ENCODE measurements at regions of chr6 and their contacts with region 1.

Region 1: GRCh38 chr6:42879372-42880239 is at the start of gene RPL7L1:
- H3K4me3 ChIP-seq: peak within 1 kb of the TSS; percentile 95
- H3K27ac ChIP-seq: peak within 1 kb of the TSS; percentile 99
- H3K4me1 ChIP-seq: no peaks in the 10 kb centered on the region
- CTCF ChIP-seq: peak; percentile 63

Region 2: GRCh38 chr6:42563697-42564505 is 315.7 kb before region 1 on chr6 and contains the start of gene UBR2:
- CTCF ChIA-PET with region 1: interaction called, 8 read pairs
- POLR2A ChIA-PET with region 1: interaction called, 11 read pairs
- H3K4me3 ChIP-seq: peak within 1 kb of the TSS; percentile 82
- H3K27ac ChIP-seq: peak within 1 kb of the TSS; percentile 59
- H3K4me1 ChIP-seq: no peaks in the 10 kb centered on the region
- CTCF ChIP-seq: peak; percentile 96

Region 3: GRCh38 chr6:42661540-42662153 is 218.0 kb before region 1 on chr6:
- CTCF ChIA-PET with region 1: interaction called, 79 read pairs
- POLR2A ChIA-PET with region 1: interaction called, 5 read pairs
- H3K4me3 ChIP-seq: no peak overlapping the region
- H3K27ac ChIP-seq: no peak overlapping the region
- H3K4me1 ChIP-seq: no peaks in the 10 kb centered on the region
- CTCF ChIP-seq: peak; percentile 47; the same call in 1 of the 2 replicates

Region 4: DNA sequence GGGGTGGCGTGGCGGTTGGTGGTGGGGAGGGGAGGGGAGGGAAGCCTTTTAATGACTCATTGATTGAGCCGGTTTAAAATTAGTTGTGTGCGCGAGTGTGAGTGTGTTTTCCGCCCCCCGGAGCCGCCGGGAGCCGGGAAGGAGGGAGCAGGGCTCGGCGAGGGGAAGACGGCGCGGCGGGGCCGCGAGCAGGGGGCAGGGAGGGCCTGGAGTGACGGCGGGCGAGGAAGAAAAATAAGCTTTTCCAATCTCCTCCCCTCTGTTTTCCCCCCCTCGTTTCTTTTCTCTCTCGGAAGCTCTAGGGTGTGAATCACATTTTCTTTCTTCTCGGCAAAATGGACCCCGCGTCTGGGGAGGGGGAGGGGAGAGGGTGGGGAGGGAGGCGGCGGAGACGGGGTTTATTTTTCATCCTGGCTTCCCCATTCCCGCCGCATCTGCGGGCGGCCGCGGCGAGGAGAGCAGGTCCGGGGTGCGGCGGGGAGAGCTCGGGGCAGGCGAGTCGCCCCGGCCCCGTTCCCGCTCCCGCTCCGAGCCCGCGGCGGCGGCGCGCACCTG is 96.9 kb before region 1 on chr6:
- CTCF ChIA-PET with region 1: interaction called, 9 read pairs
- POLR2A ChIA-PET with region 1: interaction called, 23 read pairs
- H3K4me3 ChIP-seq: peak overlapping the region; percentile 98
- H3K27ac ChIP-seq: peak overlapping the region; percentile 100
- H3K4me1 ChIP-seq: peaks cover 10% of the 10 kb centered on the region; the same call in 1 of the 2 replicates
- CTCF ChIP-seq: no peak

Region 5: GRCh38 chr6:42890311-42891198 is 10.9 kb after region 1 on chr6:
- CTCF ChIA-PET with region 1: interaction called, 5 read pairs
- POLR2A ChIA-PET with region 1: interaction called, 87 read pairs
- H3K4me3 ChIP-seq: peak overlapping the region; percentile 66
- H3K27ac ChIP-seq: peak overlapping the region; percentile 94
- H3K4me1 ChIP-seq: no peaks in the 10 kb centered on the region
- CTCF ChIP-seq: peak; percentile 51; the same call in 1 of the 2 replicates

Region 6: DNA sequence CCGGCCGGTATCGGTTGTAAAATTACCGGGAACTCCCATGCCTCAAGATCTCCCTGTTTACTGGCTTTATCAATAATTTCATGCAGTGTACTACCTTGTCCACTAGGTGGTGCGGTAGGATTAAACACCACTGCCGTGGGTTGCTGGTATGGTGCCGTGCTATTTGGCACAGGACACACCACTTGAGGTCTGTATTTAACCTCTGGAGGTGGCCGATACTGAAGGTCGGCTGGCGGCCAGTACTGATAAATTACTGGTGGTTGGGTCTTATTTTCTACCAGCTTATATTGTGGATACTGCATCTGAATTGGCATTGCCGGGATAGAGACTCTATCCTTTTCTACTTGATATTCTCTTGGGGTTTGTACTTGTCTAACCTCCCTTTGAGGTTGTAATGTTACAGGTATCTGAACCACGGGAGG is 21.9 kb after region 1 on chr6:
- CTCF ChIA-PET with region 1: interaction called, 11 read pairs
- POLR2A ChIA-PET with region 1: no interaction called
- H3K4me3 ChIP-seq: no peak overlapping the region
- H3K27ac ChIP-seq: no peak overlapping the region
- H3K4me1 ChIP-seq: no peaks in the 10 kb centered on the region; the same call in 1 of the 2 replicates
- CTCF ChIP-seq: peak; percentile 85